HepG2 (cell line): ENCODE measurements at regions of chr10 and their contacts with region 1.

Region 1: DNA sequence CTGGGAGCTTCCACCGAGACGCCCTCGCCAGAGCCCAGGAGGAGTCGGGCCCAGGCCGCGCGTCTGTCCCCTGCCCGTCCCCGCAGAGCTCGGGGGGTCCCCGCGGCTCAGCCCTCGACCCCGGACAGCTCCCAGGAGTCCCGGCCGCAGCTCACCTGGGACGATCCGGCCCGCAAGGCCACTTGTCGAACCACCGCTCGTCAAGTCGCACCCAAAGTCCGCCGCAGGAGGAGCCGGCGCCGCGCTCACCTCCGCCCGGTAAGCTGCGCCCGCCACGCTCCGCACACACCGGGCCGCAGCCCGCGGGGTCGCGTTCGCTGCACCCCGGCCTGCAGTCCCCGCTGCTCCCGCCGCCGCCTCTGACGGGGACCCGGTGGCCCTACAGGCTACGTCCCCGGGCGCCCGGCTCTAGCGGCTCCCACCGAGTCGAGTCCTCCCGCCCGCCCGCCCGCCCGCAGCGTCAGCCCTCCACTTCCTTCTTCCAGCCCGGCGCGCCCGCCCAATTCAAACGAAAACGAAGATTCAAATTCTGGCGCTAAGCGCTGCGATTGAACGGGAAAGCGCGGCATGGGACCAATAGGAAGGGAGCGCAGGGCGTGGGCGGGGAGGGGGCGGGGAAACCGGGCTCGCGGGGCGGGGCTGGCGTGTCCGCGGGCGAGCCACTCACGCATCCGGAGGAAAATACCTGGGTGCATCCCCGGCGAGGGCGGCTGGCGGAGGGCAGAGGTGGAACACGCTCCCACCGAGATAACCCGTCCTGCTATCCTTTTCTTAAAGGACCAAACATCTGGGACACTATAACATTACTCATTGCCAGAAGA is at the start of gene MKI67:
- DNase-seq: peak; percentile 91
- ATAC-seq: peak; percentile 89
- H3K4me3 ChIP-seq: peak within 1 kb of the TSS; percentile 74 to 93 (median 79)
- H3K27ac ChIP-seq: peak within 1 kb of the TSS; percentile 80
- H3K4me1 ChIP-seq: peaks cover 34% of the 10 kb centered on the region
- H3K27me3 ChIP-seq: no peaks in the 10 kb centered on the region
- CTCF ChIP-seq: no peak
- EP300 ChIP-seq: no peak
- POLR2A ChIP-seq: peak in 1 of 2 experiments; percentile 31; a peak in 2 of 4 replicates
- RAD21 ChIP-seq: no peak
- total RNA-seq, gene MKI67: 22.9 and 54.3 TPM in 2 replicates

Region 2: GRCh38 chr10:128156999-128157755 is 31.0 kb after region 1 on chr10:
- CTCF ChIA-PET with region 1: no interaction called
- POLR2A ChIA-PET with region 1: interaction called, 3 read pairs
- in situ Hi-C with region 1: no loop called
- intact Hi-C with region 1: loop called (anchors 1 kb)
- DNase-seq: peak; percentile 91
- ATAC-seq: peak; percentile 97
- H3K4me3 ChIP-seq: peak overlapping the region; percentile 15 to 62 (median 29); a peak in 4 of 6 replicates
- H3K27ac ChIP-seq: peak overlapping the region; percentile 78
- H3K4me1 ChIP-seq: peaks cover 41% of the 10 kb centered on the region
- H3K27me3 ChIP-seq: peaks cover 0 to 4% of the 10 kb centered on the region in 2 experiments; a peak in 1 of 5 replicates
- CTCF ChIP-seq: peak; percentile 46
- EP300 ChIP-seq: peak; percentile 55 to 80; a peak in 3 of 4 replicates
- POLR2A ChIP-seq: peak in 1 of 2 experiments; percentile 40; a peak in 1 of 4 replicates
- RAD21 ChIP-seq: peak; percentile 25; the same call in 1 of the 2 replicates

Region 3: GRCh38 chr10:128211953-128212727 is 86.0 kb after region 1 on chr10:
- CTCF ChIA-PET with region 1: no interaction called
- POLR2A ChIA-PET with region 1: no interaction called
- in situ Hi-C with region 1: no loop called
- intact Hi-C with region 1: loop called (anchors 1 kb)
- DNase-seq: peak; percentile 48
- ATAC-seq: peak; percentile 89
- H3K4me3 ChIP-seq: peak overlapping the region in 1 of 3 experiments; percentile 39; a peak in 1 of 6 replicates
- H3K27ac ChIP-seq: no peak overlapping the region
- H3K4me1 ChIP-seq: no peaks in the 10 kb centered on the region
- H3K27me3 ChIP-seq: peaks cover 8 to 44% of the 10 kb centered on the region in 2 experiments
- CTCF ChIP-seq: peak; percentile 91
- EP300 ChIP-seq: no peak
- POLR2A ChIP-seq: no peak
- RAD21 ChIP-seq: peak; percentile 69